Caco-2 (cell line): ENCODE measurements at regions of chr9 and their contacts with region 1.

Region 1: GRCh38 chr9:134067904-134068743 is at the start of gene BRD3:
- DNase-seq: peak; percentile 83 to 90
- H3K4me3 ChIP-seq: peak within 1 kb of the TSS; percentile 74
- H3K4me3 Mint-ChIP-seq: peak within 1 kb of the TSS; percentile 79
- H3K27ac Mint-ChIP-seq: peak within 1 kb of the TSS; percentile 48
- H3K4me1 ChIP-seq: peaks cover 12% of the 10 kb centered on the region
- H3K4me1 Mint-ChIP-seq: no peaks in the 10 kb centered on the region
- H3K27me3 ChIP-seq: no peaks in the 10 kb centered on the region
- H3K27me3 Mint-ChIP-seq: peaks cover 10% of the 10 kb centered on the region
- CTCF ChIP-seq: peak in 1 of 2 experiments; percentile 9
- total RNA-seq, gene BRD3: 57.5 and 58.3 TPM in 2 replicates

Region 2: DNA sequence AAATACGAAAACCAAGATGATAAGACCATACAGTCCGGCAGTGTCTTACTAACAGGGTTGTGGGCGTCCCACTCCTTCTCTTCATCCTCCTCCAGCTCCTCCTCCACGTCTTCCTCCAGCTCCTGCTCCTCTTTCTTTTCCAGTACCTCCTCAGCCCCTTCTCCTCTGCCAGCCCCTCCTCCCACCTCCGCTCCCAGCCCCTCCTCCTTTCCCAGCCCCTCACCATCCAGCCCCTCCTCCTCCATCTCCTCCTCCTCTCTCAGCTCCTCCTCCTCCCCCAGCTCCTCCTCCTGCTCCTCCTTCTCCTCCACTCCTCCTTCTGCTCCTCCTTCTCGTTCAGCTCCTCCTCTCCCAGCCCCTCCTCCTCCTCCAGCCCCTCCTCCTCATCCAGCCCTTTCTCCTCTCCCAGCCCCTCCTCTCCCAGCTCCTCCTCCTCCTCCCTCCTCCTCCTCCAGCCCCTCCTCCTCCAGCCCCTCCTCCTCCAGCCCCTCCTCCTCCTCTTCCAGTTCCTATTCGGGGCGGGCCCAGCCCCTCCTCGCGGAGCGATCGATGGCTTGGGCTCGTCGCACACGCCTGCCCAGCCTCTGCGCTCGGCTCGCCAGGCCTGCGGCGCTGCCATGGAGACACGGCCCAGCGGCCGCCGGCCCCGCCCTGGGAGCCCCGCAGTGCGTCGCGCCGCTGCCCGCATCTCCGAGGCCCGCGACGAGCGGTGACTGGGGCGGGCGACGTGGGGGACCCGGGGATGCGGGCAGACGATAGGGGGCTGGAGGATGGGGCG is 43.1 kb before region 1 on chr9 and contains the start of gene BRD3OS:
- CTCF ChIA-PET with region 1: no interaction called
- POLR2A ChIA-PET with region 1: interaction called, 5 read pairs
- intact Hi-C with region 1: loop called (anchors 1 kb)
- DNase-seq: peak; percentile 95 to 99
- H3K4me3 ChIP-seq: peak within 1 kb of the TSS; percentile 87
- H3K4me3 Mint-ChIP-seq: peak within 1 kb of the TSS; percentile 75
- H3K27ac Mint-ChIP-seq: peak within 1 kb of the TSS; percentile 35
- H3K4me1 ChIP-seq: 0 out of 2 replicates have a peak, but pooled peaks cover 4% of the 10 kb centered on the region
- H3K4me1 Mint-ChIP-seq: no peaks in the 10 kb centered on the region
- H3K27me3 ChIP-seq: no peaks in the 10 kb centered on the region
- H3K27me3 Mint-ChIP-seq: no peaks in the 10 kb centered on the region
- CTCF ChIP-seq: no peak
- total RNA-seq, gene BRD3OS: 9.1 and 9.4 TPM in 2 replicates

Region 3: DNA sequence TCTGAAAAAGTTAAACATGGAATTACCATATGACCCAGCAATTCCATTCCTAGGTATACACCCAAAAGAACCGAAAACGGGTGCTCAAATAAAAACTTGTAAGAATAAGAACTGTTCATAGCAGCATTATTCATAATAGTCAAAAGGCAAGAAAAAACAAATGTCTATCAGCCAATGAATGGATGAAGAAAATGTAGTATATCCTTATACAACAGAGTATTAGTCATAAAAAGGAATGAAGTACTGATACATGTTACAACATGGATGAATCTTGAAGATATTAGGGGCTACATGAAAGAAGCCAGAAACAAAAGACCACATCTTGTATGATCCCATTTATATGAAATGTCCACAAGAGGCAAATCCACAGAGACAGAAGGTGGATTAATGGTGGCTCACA is 15.3 kb after region 1 on chr9:
- CTCF ChIA-PET with region 1: no interaction called
- POLR2A ChIA-PET with region 1: no interaction called
- intact Hi-C with region 1: loop called (anchors 2 kb)
- DNase-seq: no peak
- H3K4me3 ChIP-seq: no peak overlapping the region
- H3K4me3 Mint-ChIP-seq: no peak overlapping the region
- H3K27ac Mint-ChIP-seq: no peak overlapping the region
- H3K4me1 ChIP-seq: no peaks in the 10 kb centered on the region
- H3K4me1 Mint-ChIP-seq: no peaks in the 10 kb centered on the region
- H3K27me3 ChIP-seq: no peaks in the 10 kb centered on the region
- H3K27me3 Mint-ChIP-seq: peaks cover 8% of the 10 kb centered on the region
- CTCF ChIP-seq: no peak

Region 4: GRCh38 chr9:134135343-134136118 is 67.4 kb after region 1 on chr9 and contains the start of gene WDR5:
- CTCF ChIA-PET with region 1: no interaction called
- POLR2A ChIA-PET with region 1: no interaction called
- intact Hi-C with region 1: loop called (anchors 1 kb)
- DNase-seq: peak; percentile 91 to 93
- H3K4me3 ChIP-seq: peak within 1 kb of the TSS; percentile 99
- H3K4me3 Mint-ChIP-seq: peak within 1 kb of the TSS; percentile 94
- H3K27ac Mint-ChIP-seq: peak within 1 kb of the TSS; percentile 88
- H3K4me1 ChIP-seq: peaks cover 32% of the 10 kb centered on the region
- H3K4me1 Mint-ChIP-seq: peaks cover 26% of the 10 kb centered on the region
- H3K27me3 ChIP-seq: no peaks in the 10 kb centered on the region
- H3K27me3 Mint-ChIP-seq: no peaks in the 10 kb centered on the region
- CTCF ChIP-seq: peak in 1 of 2 experiments; percentile 25
- total RNA-seq, gene WDR5: 51.7 and 54.8 TPM in 2 replicates